WTC11 (cell line): ENCODE measurements at regions of chr5 and their contacts with region 1.

Region 1: GRCh38 chr5:149125386-149125891 is 15.9 kb upstream of the ABLIM3 start:
- DNase-seq: peak; percentile 65
- ATAC-seq: peak; percentile 95
- H3K4me3 Mint-ChIP-seq: no peak overlapping the region
- H3K27ac Mint-ChIP-seq: no peak overlapping the region
- H3K4me1 Mint-ChIP-seq: peaks cover 23% of the 10 kb centered on the region
- H3K27me3 Mint-ChIP-seq: no peaks in the 10 kb centered on the region
- CTCF ChIP-seq: no peak

Region 2: GRCh38 chr5:149228618-149229297 is 103.3 kb after region 1 on chr5:
- CTCF ChIA-PET with region 1: interaction called, 17 read pairs
- POLR2A ChIA-PET with region 1: no interaction called
- DNase-seq: no peak
- ATAC-seq: peak; percentile 92
- H3K4me3 Mint-ChIP-seq: no peak overlapping the region
- H3K27ac Mint-ChIP-seq: no peak overlapping the region
- H3K4me1 Mint-ChIP-seq: peaks cover 12% of the 10 kb centered on the region
- H3K27me3 Mint-ChIP-seq: no peaks in the 10 kb centered on the region; the same call in none of the 2 replicates
- CTCF ChIP-seq: no peak

Region 3: DNA sequence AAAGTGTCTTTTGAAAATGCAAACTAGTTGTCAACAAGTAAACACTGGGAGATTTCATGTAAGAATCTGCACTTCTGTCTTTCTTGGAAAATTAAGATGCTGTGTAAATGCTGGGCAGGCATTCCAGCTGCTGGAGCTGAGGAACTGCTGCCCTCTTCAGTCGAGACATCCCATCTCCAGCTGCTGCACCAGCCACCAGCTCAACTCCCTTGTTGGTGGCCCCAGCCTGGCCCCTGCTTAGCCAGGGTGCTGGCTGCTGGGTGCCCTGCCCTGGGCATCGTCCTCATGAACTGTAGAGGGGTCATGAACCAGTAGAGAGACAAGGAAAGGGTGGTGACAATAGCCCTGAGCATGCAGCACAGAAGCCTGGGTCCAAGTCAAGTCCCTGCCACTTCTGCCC is 113.1 kb after region 1 on chr5:
- CTCF ChIA-PET with region 1: interaction called, 23 read pairs
- POLR2A ChIA-PET with region 1: no interaction called
- DNase-seq: no peak
- ATAC-seq: no peak; the same call in 1 of the 2 replicates
- H3K4me3 Mint-ChIP-seq: no peak overlapping the region
- H3K27ac Mint-ChIP-seq: no peak overlapping the region
- H3K4me1 Mint-ChIP-seq: peaks cover 3% of the 10 kb centered on the region; the same call in 1 of the 2 replicates
- H3K27me3 Mint-ChIP-seq: peaks cover 4% of the 10 kb centered on the region
- CTCF ChIP-seq: no peak